ENCODE measurements at regions of chr9 and their contacts with region 1.

Region 1: DNA sequence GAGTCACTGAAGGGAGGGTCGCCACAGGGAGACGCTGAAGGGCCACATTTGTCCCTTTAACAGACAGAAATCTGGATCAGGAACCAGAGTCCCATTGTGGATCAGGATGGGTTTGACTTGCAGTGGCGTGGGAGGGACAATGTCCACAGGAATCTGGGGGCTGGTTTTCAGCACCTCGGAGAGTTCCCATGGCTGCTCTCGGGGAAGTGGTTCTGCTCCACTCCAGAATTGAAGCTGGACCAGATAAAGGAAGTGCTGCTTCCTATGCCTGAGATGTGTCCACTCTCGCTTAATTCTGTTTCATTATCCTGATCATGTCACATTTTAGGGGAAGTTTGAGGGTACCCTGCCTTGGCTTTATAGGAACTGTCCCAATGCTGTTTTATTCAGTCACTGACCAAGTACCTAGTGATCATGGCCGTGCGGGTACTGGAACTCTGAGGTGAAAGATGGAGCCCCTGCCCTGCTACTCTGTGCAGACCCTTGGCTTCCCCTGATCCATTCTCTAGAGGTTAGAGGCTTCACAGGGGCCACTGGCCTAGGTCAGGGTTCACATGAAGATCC is 28.7 kb downstream of the ENHO start:
- DNase-seq: peak in 4 of 6 donors; percentile 11 to 37 (median 34)
- ATAC-seq: peak in 3 of 4 donors; percentile 49 to 83 (median 61)
- H3K4me3 ChIP-seq: no peak overlapping the region
- H3K27ac ChIP-seq: no peak overlapping the region
- H3K4me1 ChIP-seq: no peaks in the 10 kb centered on the region
- H3K27me3 ChIP-seq: no peaks in the 10 kb centered on the region
- CTCF ChIP-seq: no peak

Region 2: DNA sequence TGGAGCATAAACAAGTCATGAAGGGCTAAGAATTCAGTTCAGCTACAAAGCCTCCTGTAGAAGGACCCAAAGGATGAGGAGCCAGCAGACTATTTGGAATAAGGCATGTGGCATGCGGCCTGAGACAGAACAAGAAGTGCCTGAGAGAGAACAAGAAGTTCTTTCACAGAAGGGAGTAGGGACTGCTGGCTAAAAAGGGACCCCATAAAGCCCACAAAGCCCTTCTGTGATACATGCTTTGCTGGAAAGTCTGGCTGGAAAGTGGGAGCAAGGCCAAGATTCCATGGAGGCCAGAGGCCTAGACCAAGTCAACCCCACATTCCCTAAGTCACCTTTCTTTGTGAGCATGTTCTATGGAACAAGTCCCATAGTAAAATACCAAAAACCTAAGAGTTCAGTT is 409.5 kb before region 1 on chr9:
- intact Hi-C with region 1: no loop called
- DNase-seq: no peak
- ATAC-seq: peak in 2 of 4 donors; percentile 18 to 19
- H3K4me3 ChIP-seq: no peak overlapping the region
- H3K27ac ChIP-seq: no peak overlapping the region
- H3K4me1 ChIP-seq: no peaks in the 10 kb centered on the region
- H3K27me3 ChIP-seq: no peaks in the 10 kb centered on the region
- CTCF ChIP-seq: no peak

Region 3: GRCh38 chr9:34403554-34404380 is 90.3 kb before region 1 on chr9:
- intact Hi-C with region 1: loop called in 1 of 3 experiments (anchors 10 kb)
- DNase-seq: peak; percentile 43 to 86 (median 69)
- ATAC-seq: peak; percentile 62 to 91 (median 85)
- H3K4me3 ChIP-seq: no peak overlapping the region
- H3K27ac ChIP-seq: no peak overlapping the region
- H3K4me1 ChIP-seq: no peaks in the 10 kb centered on the region
- H3K27me3 ChIP-seq: no peaks in the 10 kb centered on the region
- CTCF ChIP-seq: peak; percentile 87 to 98 (median 96)